AG04449 (cell line): ENCODE measurements at regions of chr14 and their contacts with region 1.

Region 1: GRCh38 chr14:69611201-69612011 is at the start of gene SUSD6:
- DNase-seq: no peak
- H3K4me3 ChIP-seq: peak within 1 kb of the TSS; percentile 79
- CTCF ChIP-seq: no peak

Region 2: DNA sequence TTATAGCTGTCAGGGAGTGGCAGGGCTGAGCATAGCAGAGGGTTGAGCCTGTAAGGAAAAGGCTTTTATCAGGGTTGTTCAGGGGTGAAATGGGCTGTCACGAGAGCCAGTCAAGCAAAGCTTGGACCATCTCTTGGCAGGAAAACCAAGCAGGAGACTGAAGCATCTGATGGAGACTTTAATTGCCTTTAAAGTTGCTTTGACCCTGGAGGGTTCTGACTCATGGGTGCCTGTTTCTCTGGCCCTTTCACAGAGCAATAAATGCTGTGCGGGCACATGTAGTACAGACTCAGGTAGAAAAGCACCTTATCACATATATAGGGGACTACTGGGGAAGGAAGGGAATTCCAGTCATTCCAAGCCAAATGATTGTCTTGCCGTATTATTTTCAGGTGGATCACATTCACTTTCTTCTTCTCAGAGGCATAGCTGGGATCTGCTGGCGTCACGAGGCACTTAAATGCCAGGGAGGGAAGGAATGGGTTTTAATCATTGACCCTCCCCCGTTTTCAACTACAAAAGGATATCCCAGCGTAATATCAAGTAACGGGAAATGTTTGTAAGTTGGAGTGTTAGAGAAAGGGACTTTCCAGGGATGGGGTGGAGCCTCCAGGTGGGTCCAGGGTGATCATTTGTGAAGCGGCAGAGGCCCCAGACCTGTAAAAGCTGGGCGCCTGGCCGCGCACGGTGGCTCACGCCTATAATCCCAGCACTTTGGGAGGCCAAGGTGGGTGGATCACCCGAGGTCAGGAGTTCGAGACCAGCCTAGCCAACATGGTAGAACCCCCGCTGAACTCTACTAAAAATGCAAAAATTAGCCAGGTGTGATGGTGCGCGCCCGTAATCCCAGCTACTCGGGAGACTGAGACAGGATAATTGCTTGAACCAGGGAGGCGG is 92.0 kb before region 1 on chr14:
- CTCF ChIA-PET with region 1: no interaction called
- POLR2A ChIA-PET with region 1: no interaction called
- DNase-seq: no peak
- H3K4me3 ChIP-seq: no peak overlapping the region
- CTCF ChIP-seq: no peak

Region 3: GRCh38 chr14:69580009-69580577 is 31.3 kb before region 1 on chr14:
- CTCF ChIA-PET with region 1: interaction called, 83 read pairs
- POLR2A ChIA-PET with region 1: no interaction called
- DNase-seq: peak; percentile 42
- H3K4me3 ChIP-seq: no peak overlapping the region
- CTCF ChIP-seq: peak; percentile 69

Region 4: GRCh38 chr14:69586404-69586803 is 25.0 kb before region 1 on chr14:
- CTCF ChIA-PET with region 1: interaction called, 83 read pairs
- POLR2A ChIA-PET with region 1: no interaction called
- DNase-seq: no peak
- H3K4me3 ChIP-seq: no peak overlapping the region
- CTCF ChIP-seq: no peak

Region 5: GRCh38 chr14:69593018-69593677 is 18.3 kb before region 1 on chr14:
- CTCF ChIA-PET with region 1: interaction called, 36 read pairs
- POLR2A ChIA-PET with region 1: interaction called, 3 read pairs
- DNase-seq: no peak
- H3K4me3 ChIP-seq: peak overlapping the region; percentile 29
- CTCF ChIP-seq: no peak

Region 6: GRCh38 chr14:69715725-69716477 is 104.5 kb after region 1 on chr14:
- CTCF ChIA-PET with region 1: interaction called, 37 read pairs
- POLR2A ChIA-PET with region 1: interaction called, 4 read pairs
- DNase-seq: peak; percentile 45
- H3K4me3 ChIP-seq: no peak overlapping the region
- CTCF ChIP-seq: no peak

Region 7: GRCh38 chr14:69749956-69750355 is 138.6 kb after region 1 on chr14:
- CTCF ChIA-PET with region 1: no interaction called
- POLR2A ChIA-PET with region 1: no interaction called
- DNase-seq: no peak
- H3K4me3 ChIP-seq: no peak overlapping the region
- CTCF ChIP-seq: no peak